ENCODE measurements at regions of chr12 and their contacts with region 1.

Region 1: DNA sequence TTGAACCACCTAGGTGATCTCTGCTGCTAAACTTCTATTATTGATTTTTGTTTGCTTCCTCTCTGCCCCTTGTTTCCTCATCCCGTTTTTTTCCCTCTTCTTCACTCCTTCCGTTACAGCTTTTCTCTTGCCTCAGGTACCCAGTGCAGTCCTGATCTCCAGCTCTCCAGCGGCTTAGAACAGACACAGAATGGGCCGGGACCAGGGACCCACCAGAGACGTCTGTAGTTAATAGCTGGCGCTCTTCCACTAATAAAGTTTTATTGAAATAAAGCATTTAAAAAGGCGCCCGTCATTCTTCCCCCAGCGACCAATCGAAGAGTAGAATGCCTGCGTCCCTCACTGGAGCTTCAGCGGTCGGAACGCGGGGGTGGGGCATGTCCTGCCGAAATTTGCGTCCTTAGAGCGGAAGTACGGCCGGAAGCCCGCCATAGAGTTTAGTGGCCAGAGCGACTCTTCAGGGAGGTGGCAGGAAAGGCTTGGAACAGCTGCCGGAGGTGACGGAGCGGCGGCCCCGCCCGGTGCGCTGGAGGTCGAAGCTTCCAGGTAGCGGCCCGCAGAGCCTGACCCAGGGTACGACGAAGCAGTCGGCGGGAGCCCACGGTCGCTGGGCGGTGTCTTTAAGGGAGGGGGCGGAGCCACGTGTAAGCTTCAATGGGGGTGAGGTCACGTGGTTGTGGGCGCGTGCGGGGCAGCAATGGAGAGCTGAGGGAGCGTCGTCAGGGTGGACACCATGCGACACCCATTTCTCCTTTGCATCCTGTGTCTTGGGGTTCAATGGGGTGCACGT is at the start of gene COPS7A:
- DNase-seq: peak; percentile 99
- ATAC-seq: peak; percentile 99
- total RNA-seq, gene COPS7A: 83.1 TPM

Region 2: DNA sequence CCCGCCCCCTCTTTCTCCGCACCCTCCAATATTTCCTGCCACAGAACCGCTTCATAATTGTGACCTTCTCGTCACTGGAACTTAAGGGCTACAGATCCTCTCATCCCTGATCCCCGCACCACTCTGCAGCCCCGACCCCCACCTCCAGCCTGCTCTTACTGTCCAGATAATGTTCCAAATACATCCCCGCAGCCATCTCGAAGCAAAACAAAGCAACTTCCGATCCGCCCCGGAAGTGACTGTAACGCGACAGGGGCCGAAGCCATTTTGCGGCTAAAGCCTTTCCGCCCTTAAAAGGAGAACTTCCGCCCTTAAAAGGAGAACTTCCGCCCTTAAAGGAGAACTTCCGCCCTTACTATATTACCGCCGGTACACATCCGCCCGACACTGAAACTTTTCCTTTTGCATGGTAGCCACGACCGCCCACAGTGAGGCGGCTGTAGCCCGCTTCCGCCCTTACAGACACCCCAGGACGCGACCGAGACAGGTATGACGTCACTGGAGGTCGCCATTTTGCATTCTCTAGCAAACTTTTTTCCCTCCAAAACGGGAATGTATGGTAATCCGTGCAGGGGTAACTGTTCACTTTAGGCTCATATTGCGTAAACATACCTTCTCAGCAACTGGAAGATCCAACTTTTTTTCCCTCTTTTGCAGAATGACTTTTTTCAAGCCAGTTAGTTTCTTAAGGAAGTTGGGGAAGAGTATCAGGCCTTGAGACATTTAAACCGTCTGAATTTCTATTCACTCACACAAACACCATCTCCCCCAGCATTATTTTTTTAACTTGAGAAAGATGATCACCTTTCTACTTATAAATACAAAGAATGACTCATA is 60.7 kb before region 1 on chr12 and contains the start of gene ING4:
- intact Hi-C with region 1: loop called (anchors 10 kb)
- DNase-seq: peak; percentile 99
- ATAC-seq: peak; percentile 100
- total RNA-seq, gene ING4: 21.1 TPM

Region 3: DNA sequence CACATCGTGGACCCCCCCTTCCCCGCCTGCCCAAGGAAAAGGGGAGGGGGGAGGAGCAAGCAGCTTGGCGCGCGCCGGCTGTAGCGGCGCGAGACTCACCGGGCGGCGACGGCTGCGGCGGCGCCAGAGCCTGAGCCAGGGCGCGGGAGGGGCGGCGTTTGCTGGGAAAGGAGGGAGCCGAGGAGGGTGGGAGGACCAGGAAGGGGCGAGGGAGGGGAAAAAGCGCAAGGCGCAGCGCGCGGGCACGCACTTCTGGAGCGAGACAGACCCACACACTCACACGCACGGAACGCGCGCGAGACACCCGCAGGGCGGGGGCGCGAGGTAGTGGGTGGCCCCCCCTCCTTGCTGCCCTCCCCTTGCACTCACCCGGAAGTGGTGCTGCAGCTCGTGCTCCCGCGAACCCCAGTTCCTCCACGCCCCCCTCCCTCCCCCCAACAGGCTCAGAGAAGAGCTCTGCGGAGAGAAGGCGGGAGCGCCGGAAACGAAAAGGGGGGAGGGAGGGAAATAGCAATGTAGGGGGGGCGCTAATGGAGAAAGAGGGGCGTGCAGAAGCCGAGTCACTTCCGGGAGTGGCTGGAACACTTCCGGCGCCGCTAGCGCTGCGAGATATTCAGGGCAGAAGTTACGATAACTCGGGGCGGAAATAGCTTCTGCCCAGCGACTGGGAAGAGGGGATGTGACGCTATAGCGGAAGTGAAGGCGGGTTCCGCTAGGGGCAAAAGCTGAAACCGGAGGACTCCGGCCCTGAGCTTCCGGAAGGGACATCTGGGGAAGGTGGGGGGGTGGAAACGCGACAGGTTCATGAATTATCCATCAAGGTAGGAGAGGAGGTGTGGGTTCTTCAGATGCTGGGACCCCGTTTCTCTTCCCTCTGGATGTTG is 34.6 kb before region 1 on chr12 and contains the start of gene ZNF384:
- intact Hi-C with region 1: loop called (anchors 2 kb)
- DNase-seq: peak; percentile 97
- ATAC-seq: peak; percentile 94
- total RNA-seq, gene ZNF384: 26.0 TPM

Region 4: GRCh38 chr12:6825398-6826124 is 101.8 kb after region 1 on chr12:
- intact Hi-C with region 1: no loop called
- DNase-seq: peak; percentile 89
- ATAC-seq: peak; percentile 58

Region 5: GRCh38 chr12:6843118-6843902 is 119.5 kb after region 1 on chr12:
- intact Hi-C with region 1: no loop called
- DNase-seq: peak; percentile 39
- ATAC-seq: no peak